MCF 10A (cell line): ENCODE measurements at regions of chr6 and their contacts with region 1.

Region 1: DNA sequence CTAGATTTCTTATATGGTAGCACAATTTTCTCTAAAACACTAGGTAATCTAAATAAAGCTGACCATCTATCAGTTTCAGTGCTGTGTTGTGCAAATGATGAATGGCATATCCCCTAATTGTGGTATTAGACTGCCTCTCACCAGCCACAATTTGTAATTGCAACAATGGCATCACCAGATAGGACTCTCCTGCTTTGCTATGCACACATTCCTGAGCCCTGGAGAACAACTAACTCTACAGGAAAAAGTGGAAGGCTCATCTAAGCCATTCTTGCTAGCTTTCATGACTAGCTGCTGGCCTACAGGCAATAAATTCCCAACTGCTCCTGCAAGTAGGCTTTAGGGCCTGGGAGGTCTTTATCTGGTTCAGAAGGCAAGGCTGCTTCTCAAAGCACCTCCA is 974.1 kb downstream of the EYS start:
- DNase-seq: peak; percentile 16
- H3K4me3 Mint-ChIP-seq: no peak overlapping the region
- H3K27ac Mint-ChIP-seq: no peak overlapping the region
- H3K4me1 Mint-ChIP-seq: peaks cover 5% of the 10 kb centered on the region
- H3K27me3 Mint-ChIP-seq: no peaks in the 10 kb centered on the region
- CTCF ChIP-seq: peak; percentile 9

Region 2: DNA sequence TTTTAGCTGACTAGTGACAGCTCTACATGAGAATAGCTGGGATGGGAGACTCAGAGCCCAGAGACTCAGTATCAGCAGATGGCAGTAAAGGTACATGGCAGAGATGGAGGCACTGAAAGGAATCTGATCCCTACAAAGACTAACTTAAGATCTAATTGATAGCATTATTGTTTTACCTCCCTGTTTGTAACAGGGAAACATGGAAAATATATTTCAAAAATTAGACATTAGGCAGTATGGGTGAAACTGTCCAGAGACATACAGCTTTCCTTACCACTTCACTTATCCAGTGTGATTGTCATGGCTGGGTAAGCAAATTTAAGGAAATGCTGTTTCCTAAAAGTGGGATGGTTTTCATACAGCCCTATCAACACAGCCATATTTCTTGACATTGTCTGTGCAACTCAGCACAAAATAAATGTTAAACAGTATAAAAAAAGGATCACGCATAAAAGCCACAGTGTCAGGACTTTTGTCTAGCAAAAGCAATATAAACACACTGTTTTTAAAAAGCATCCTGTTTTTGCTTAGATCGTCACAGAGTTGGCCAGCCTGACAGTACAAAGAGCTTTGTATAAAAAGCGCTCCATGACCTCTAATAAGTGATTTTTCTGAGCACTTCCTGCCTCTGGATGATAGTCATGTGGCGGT is 720.4 kb before region 1 on chr6:
- CTCF ChIA-PET with region 1: no interaction called
- POLR2A ChIA-PET with region 1: no interaction called
- intact Hi-C with region 1: loop called (anchors 5 kb)
- DNase-seq: peak; percentile 64
- H3K4me3 Mint-ChIP-seq: no peak overlapping the region
- H3K27ac Mint-ChIP-seq: no peak overlapping the region
- H3K4me1 Mint-ChIP-seq: no peaks in the 10 kb centered on the region
- H3K27me3 Mint-ChIP-seq: no peaks in the 10 kb centered on the region
- CTCF ChIP-seq: peak; percentile 92

Region 3: GRCh38 chr6:64683682-64684081 is 49.2 kb before region 1 on chr6:
- CTCF ChIA-PET with region 1: no interaction called
- POLR2A ChIA-PET with region 1: no interaction called
- intact Hi-C with region 1: no loop called
- DNase-seq: no peak
- H3K4me3 Mint-ChIP-seq: no peak overlapping the region
- H3K27ac Mint-ChIP-seq: no peak overlapping the region
- H3K4me1 Mint-ChIP-seq: peaks cover 18% of the 10 kb centered on the region
- H3K27me3 Mint-ChIP-seq: no peaks in the 10 kb centered on the region
- CTCF ChIP-seq: no peak